PC-9 (cell line): ENCODE measurements at regions of chr9 and their contacts with region 1.

Region 1: GRCh38 chr9:107263289-107263688 is 19.8 kb upstream of the RAD23B start:
- DNase-seq: no peak
- H3K4me3 ChIP-seq: no peak overlapping the region
- H3K27ac ChIP-seq: no peak overlapping the region
- H3K4me1 ChIP-seq: peaks cover 45% of the 10 kb centered on the region
- H3K27me3 ChIP-seq: no peaks in the 10 kb centered on the region
- CTCF ChIP-seq: no peak

Region 2: GRCh38 chr9:107213561-107214028 is 49.7 kb before region 1 on chr9:
- CTCF ChIA-PET with region 1: no interaction called
- POLR2A ChIA-PET with region 1: no interaction called
- intact Hi-C with region 1: no loop called
- DNase-seq: peak; percentile 37 to 72
- H3K4me3 ChIP-seq: no peak overlapping the region
- H3K27ac ChIP-seq: peak overlapping the region; percentile 40
- H3K4me1 ChIP-seq: peaks cover 17% of the 10 kb centered on the region
- H3K27me3 ChIP-seq: no peaks in the 10 kb centered on the region
- CTCF ChIP-seq: no peak

Region 3: GRCh38 chr9:108776920-108777645 is 1513.8 kb after region 1 on chr9:
- CTCF ChIA-PET with region 1: interaction called, 19 read pairs
- POLR2A ChIA-PET with region 1: no interaction called
- intact Hi-C with region 1: no loop called
- DNase-seq: peak; percentile 81 to 83
- H3K4me3 ChIP-seq: no peak overlapping the region
- H3K27ac ChIP-seq: 0 out of 2 replicates have a peak overlapping the region, but pooled peaks have one; percentile 10
- H3K4me1 ChIP-seq: peaks cover 20% of the 10 kb centered on the region
- H3K27me3 ChIP-seq: peaks cover 14% of the 10 kb centered on the region; the same call in 1 of the 2 replicates
- CTCF ChIP-seq: peak; percentile 55; the same call in 1 of the 2 replicates